H1 (cell line): ENCODE measurements at regions of chr11 and their contacts with region 1.

Region 1: DNA sequence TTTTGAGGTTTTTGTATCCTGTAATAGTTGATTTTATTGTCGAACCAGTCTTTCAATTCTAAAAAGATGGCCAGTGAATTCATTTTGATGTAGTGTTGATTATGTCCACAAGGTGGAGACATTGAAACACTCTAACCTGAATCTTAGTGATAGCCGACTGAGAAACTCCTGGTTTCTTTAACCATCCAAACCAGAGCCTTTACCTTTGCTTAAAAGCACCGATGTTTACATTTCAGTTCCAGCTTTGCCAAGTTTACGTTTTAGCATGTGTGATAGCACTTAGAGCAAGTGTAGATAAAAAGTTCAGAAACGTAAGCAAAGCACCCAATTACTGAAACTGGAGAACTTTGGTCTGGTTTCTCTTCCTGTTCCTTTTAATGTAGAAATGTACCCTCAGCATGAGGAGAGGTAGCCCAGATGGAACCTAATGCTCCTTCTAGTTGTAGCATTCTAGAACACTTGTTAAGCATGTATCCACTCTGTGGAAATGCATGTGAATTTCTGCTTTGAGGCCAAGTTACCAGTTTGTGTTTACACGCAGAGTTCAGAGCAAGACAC is 208.6 kb downstream of the DBX1 start:
- DNase-seq: no peak
- H3K4me3 ChIP-seq: no peak overlapping the region
- H3K27ac ChIP-seq: no peak overlapping the region
- H3K4me1 ChIP-seq: peaks cover 8 to 21% (median 20%) of the 10 kb centered on the region in 4 experiments; a peak in 6 of 7 replicates
- H3K27me3 ChIP-seq: no peaks in the 10 kb centered on the region
- CTCF ChIP-seq: peak in 2 of 3 experiments; percentile 43 to 65; a peak in 3 of 4 replicates
- EP300 ChIP-seq: no peak
- POLR2A ChIP-seq: no peak
- RAD21 ChIP-seq: peak; percentile 74 to 80

Region 2: DNA sequence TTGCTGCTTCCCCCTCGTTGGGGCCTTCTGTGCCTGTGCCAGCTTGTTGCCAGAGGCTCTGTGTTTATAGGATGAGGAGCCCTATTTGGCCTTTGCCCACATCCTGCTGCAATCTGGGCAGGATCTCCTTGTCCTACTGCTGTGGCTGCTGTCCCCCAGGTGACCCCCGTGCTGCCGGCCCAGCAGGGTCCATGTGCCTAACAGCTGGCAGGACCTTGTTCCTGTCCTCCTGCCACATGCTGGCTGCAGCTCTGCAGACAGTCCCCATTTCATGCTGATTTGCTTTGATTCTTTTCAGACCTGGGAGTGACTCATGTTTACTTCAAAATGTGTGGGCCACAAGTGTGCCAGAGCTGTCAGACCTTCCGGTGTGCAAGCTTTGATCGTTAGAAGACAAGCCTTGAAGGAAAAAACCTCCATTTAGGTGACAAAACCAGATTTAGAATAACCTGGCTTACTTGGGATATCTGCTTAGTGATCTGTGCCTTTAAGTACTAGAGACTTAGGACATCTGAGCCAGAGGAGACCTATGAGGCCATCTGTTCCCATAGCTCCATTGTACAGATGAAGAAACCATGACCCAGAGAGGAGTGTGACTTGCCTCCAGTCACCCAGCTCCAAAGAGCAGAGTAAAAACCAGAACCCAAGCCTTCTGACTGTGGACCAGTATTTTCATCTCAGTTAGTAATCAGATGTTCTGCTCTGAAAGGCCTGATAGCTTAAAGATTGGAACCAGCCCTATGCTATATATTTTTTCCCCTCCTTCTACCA is 227.9 kb before region 1 on chr11:
- CTCF ChIA-PET with region 1: no interaction called
- POLR2A ChIA-PET with region 1: no interaction called
- DNase-seq: no peak
- H3K4me3 ChIP-seq: no peak overlapping the region
- H3K27ac ChIP-seq: no peak overlapping the region
- H3K4me1 ChIP-seq: no peaks in the 10 kb centered on the region
- H3K27me3 ChIP-seq: no peaks in the 10 kb centered on the region; a peak in 1 of 7 replicates
- CTCF ChIP-seq: no peak
- EP300 ChIP-seq: no peak
- POLR2A ChIP-seq: no peak
- RAD21 ChIP-seq: no peak

Region 3: GRCh38 chr11:19938169-19938856 is 13.3 kb before region 1 on chr11:
- CTCF ChIA-PET with region 1: interaction called, 55 read pairs
- POLR2A ChIA-PET with region 1: no interaction called
- DNase-seq: peak in 1 of 2 experiments; percentile 79
- H3K4me3 ChIP-seq: no peak overlapping the region
- H3K27ac ChIP-seq: no peak overlapping the region
- H3K4me1 ChIP-seq: peaks cover 2 to 11% (median 4%) of the 10 kb centered on the region in 4 experiments; a peak in 4 of 7 replicates
- H3K27me3 ChIP-seq: no peaks in the 10 kb centered on the region
- CTCF ChIP-seq: peak; percentile 65 to 94 (median 90)
- EP300 ChIP-seq: no peak
- POLR2A ChIP-seq: no peak
- RAD21 ChIP-seq: peak; percentile 68 to 69

Region 4: GRCh38 chr11:20000351-20001134 is 48.9 kb after region 1 on chr11:
- CTCF ChIA-PET with region 1: interaction called, 13 read pairs
- POLR2A ChIA-PET with region 1: no interaction called
- DNase-seq: peak; percentile 72 to 96
- H3K4me3 ChIP-seq: peak overlapping the region in 2 of 4 experiments; percentile 17 to 35; a peak in 3 of 8 replicates
- H3K27ac ChIP-seq: no peak overlapping the region
- H3K4me1 ChIP-seq: peaks cover 14 to 30% (median 20%) of the 10 kb centered on the region in 4 experiments
- H3K27me3 ChIP-seq: peaks cover 0 to 18% (median 15%) of the 10 kb centered on the region in 4 experiments; a peak in 6 of 7 replicates
- CTCF ChIP-seq: peak in 1 of 3 experiments; percentile 27; a peak in 1 of 4 replicates
- EP300 ChIP-seq: no peak
- POLR2A ChIP-seq: 0 out of 3 replicates have a peak, but pooled peaks of 1 of the 2 experiments have one; percentile 35
- RAD21 ChIP-seq: peak; percentile 3 to 29; a peak in 2 of 4 replicates

Region 5: DNA sequence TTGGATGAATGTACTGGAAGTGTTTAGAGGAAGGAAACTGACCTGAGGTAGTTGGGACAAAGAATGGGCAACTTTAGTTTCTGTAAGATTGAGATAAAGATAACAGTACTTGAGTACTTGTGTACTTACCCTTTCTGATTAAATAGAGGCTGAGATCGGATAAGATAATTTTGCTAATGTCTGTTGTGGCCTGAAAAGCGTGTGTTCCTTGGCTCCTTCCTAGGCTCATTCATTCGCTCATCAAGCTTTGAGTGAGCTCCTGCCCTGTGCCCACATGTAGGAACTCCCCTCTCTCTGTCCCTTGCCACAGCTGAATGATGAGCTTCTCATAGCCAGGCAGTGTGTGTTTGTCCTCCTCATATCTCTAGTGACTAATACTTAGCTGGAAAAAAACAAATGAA is 90.5 kb after region 1 on chr11:
- CTCF ChIA-PET with region 1: interaction called, 56 read pairs
- POLR2A ChIA-PET with region 1: no interaction called
- DNase-seq: no peak
- H3K4me3 ChIP-seq: no peak overlapping the region
- H3K27ac ChIP-seq: no peak overlapping the region
- H3K4me1 ChIP-seq: peaks cover 4 to 12% (median 7%) of the 10 kb centered on the region in 4 experiments; a peak in 6 of 7 replicates
- H3K27me3 ChIP-seq: no peaks in the 10 kb centered on the region
- CTCF ChIP-seq: no peak
- EP300 ChIP-seq: no peak
- POLR2A ChIP-seq: no peak
- RAD21 ChIP-seq: no peak

Region 6: DNA sequence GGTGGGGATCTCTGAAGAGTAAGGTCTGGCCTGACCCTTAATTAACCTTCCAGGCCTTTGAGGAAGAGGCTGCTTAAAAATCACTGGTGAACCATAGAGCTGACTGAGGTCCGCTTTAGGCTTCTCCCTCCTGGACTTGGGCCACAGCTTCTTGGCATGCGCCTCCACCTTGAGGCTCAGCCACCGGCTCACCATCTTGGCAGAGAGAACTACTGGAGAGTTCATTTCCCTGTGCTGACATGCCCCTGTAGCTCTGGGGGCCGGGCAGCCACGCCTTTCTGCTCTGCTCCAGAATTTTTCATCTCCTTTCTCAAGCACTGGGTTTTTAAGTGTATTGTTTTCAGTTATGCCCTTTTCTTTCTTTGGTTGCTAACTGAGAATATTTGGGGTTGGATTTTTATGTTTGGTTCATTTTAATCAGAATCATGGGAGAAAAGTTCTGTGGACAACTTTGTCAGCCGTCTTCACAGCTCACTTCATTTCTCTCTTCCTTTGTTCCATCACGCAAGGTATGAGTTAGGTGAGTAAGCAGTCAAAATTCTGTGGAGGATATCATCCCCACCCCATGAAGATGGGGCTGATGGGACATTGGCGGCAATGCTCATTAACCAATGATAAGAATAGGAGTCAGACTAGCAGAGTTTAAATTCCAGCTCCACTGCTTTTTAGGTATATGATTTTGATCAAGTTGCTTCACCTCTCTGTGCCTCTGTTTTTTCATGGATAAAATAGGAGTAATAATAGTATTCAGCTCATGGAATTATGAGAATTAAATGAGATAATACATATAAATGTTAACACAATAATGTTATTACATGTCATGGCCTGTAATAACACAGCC is 104.7 kb after region 1 on chr11:
- CTCF ChIA-PET with region 1: interaction called, 28 read pairs
- POLR2A ChIA-PET with region 1: interaction called, 4 read pairs
- DNase-seq: no peak
- H3K4me3 ChIP-seq: no peak overlapping the region
- H3K27ac ChIP-seq: no peak overlapping the region
- H3K4me1 ChIP-seq: peaks cover 0 to 1% (median under 1%) of the 10 kb centered on the region in 4 experiments; a peak in 2 of 7 replicates
- H3K27me3 ChIP-seq: no peaks in the 10 kb centered on the region
- CTCF ChIP-seq: no peak
- EP300 ChIP-seq: no peak
- POLR2A ChIP-seq: no peak
- RAD21 ChIP-seq: no peak

Region 7: GRCh38 chr11:20097319-20098221 is 145.9 kb after region 1 on chr11:
- CTCF ChIA-PET with region 1: interaction called, 13 read pairs
- POLR2A ChIA-PET with region 1: no interaction called
- DNase-seq: no peak
- H3K4me3 ChIP-seq: no peak overlapping the region
- H3K27ac ChIP-seq: no peak overlapping the region
- H3K4me1 ChIP-seq: no peaks in the 10 kb centered on the region
- H3K27me3 ChIP-seq: no peaks in the 10 kb centered on the region; a peak in 1 of 7 replicates
- CTCF ChIP-seq: no peak
- EP300 ChIP-seq: no peak
- POLR2A ChIP-seq: no peak
- RAD21 ChIP-seq: no peak

Region 8: GRCh38 chr11:20127671-20128527 is 176.3 kb after region 1 on chr11:
- CTCF ChIA-PET with region 1: interaction called, 32 read pairs
- POLR2A ChIA-PET with region 1: no interaction called
- DNase-seq: peak in 1 of 2 experiments; percentile 95
- H3K4me3 ChIP-seq: no peak overlapping the region
- H3K27ac ChIP-seq: no peak overlapping the region
- H3K4me1 ChIP-seq: peaks cover 0 to 5% (median 4%) of the 10 kb centered on the region in 4 experiments; a peak in 5 of 7 replicates
- H3K27me3 ChIP-seq: peaks cover 8 to 24% (median 17%) of the 10 kb centered on the region in 4 experiments
- CTCF ChIP-seq: peak; percentile 90 to 93 (median 92)
- EP300 ChIP-seq: no peak
- POLR2A ChIP-seq: no peak
- RAD21 ChIP-seq: peak; percentile 98